CD4-positive, alpha-beta memory T cell (primary cell): ENCODE measurements at regions of chr22 and their contacts with region 1.

Region 1: GRCh38 chr22:29387921-29388758 is at the start of gene AP1B1:
- DNase-seq: peak; percentile 87 to 91 (median 88)
- H3K4me3 ChIP-seq: peak within 1 kb of the TSS; percentile 64 to 77
- H3K4me3 Mint-ChIP-seq: peak within 1 kb of the TSS; percentile 89 to 98 (median 93)
- H3K27ac ChIP-seq: peak within 1 kb of the TSS; percentile 86
- H3K27ac Mint-ChIP-seq: peak within 1 kb of the TSS; percentile 90 to 96 (median 95)
- H3K4me1 ChIP-seq: peaks cover 54% of the 10 kb centered on the region
- H3K4me1 Mint-ChIP-seq: peaks cover 26 to 54% (median 39%) of the 10 kb centered on the region in 4 donors
- H3K27me3 ChIP-seq: no peaks in the 10 kb centered on the region
- H3K27me3 Mint-ChIP-seq: no peaks in the 10 kb centered on the region
- total RNA-seq, gene AP1B1: 41.3 to 42.7 TPM

Region 2: GRCh38 chr22:29267858-29268417 is 120.2 kb before region 1 on chr22 and contains the starts of genes EWSR1 and RHBDD3:
- CTCF ChIA-PET with region 1: no interaction called
- POLR2A ChIA-PET with region 1: no interaction called
- intact Hi-C with region 1: loop called (anchors 10 kb)
- DNase-seq: peak; percentile 95 to 100 (median 96)
- H3K4me3 ChIP-seq: peak within 1 kb of the TSS; percentile 78 to 79
- H3K4me3 Mint-ChIP-seq: peak within 1 kb of the TSS; percentile 91 to 99 (median 98)
- H3K27ac ChIP-seq: peak within 1 kb of the TSS; percentile 99
- H3K27ac Mint-ChIP-seq: peak within 1 kb of the TSS; percentile 97 to 100 (median 99)
- H3K4me1 ChIP-seq: peaks cover 54% of the 10 kb centered on the region
- H3K4me1 Mint-ChIP-seq: peaks cover 37 to 63% (median 47%) of the 10 kb centered on the region in 4 donors
- H3K27me3 ChIP-seq: no peaks in the 10 kb centered on the region
- H3K27me3 Mint-ChIP-seq: no peaks in the 10 kb centered on the region
- total RNA-seq, gene EWSR1: 247 to 250 TPM
- total RNA-seq, gene RHBDD3: 14.2 to 16.1 TPM

Region 3: GRCh38 chr22:29288837-29289236 is 99.3 kb before region 1 on chr22:
- CTCF ChIA-PET with region 1: no interaction called
- POLR2A ChIA-PET with region 1: no interaction called
- intact Hi-C with region 1: no loop called
- DNase-seq: no peak
- H3K4me3 ChIP-seq: no peak overlapping the region
- H3K4me3 Mint-ChIP-seq: peak overlapping the region in 2 of 8 donors; percentile 6 to 14
- H3K27ac ChIP-seq: no peak overlapping the region
- H3K27ac Mint-ChIP-seq: peak overlapping the region in 5 of 7 donors; percentile 10 to 76 (median 45)
- H3K4me1 ChIP-seq: no peaks in the 10 kb centered on the region
- H3K4me1 Mint-ChIP-seq: peaks cover 11 to 25% (median 14%) of the 10 kb centered on the region in 4 donors
- H3K27me3 ChIP-seq: no peaks in the 10 kb centered on the region
- H3K27me3 Mint-ChIP-seq: no peaks in the 10 kb centered on the region